MCF 10A (cell line): ENCODE measurements at regions of chr3 and their contacts with region 1.

Region 1: DNA sequence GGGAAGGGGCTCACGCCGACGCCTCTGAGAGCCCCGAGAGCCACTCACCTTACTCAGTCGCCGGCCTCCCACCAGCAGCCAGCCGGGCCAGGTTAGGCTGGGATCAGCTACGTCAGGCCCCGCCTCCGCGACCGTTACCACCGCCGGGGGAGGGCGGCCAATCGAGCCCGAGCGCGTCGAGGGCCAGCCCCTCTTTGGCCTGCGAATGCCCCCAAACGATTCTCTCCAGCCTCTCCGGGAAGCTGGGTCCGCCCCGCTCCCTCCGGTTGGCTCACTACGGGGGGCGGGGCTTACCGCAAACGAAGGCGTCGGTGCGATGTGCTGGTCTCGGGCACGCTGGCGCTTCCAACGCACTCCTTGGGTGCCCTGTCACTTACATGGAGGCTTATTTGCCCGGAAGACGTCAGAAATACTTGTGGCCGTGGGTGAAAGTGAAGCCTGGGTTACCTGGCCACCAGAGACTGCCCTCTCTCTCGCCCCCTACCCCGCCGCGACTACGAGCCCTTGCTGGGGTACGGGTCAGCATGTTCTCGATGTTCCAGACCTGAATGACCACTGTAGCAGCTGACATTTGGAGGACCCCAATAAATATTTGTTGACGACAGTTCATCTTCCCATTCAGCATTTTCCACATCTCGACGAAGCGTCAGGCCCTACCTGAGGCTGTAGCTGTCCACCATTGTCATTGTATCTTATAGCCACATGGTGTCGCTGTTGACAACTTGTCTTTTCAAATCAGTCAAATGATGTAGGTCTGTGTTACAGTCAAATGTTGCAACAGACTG is at the start of gene CEP70:
- DNase-seq: peak; percentile 96
- H3K4me3 Mint-ChIP-seq: peak within 1 kb of the TSS; percentile 81
- H3K27ac Mint-ChIP-seq: peak within 1 kb of the TSS; percentile 69
- H3K4me1 Mint-ChIP-seq: no peaks in the 10 kb centered on the region
- H3K27me3 Mint-ChIP-seq: no peaks in the 10 kb centered on the region
- CTCF ChIP-seq: peak; percentile 81
- total RNA-seq, gene CEP70: 21.3 and 25.9 TPM in 2 replicates

Region 2: DNA sequence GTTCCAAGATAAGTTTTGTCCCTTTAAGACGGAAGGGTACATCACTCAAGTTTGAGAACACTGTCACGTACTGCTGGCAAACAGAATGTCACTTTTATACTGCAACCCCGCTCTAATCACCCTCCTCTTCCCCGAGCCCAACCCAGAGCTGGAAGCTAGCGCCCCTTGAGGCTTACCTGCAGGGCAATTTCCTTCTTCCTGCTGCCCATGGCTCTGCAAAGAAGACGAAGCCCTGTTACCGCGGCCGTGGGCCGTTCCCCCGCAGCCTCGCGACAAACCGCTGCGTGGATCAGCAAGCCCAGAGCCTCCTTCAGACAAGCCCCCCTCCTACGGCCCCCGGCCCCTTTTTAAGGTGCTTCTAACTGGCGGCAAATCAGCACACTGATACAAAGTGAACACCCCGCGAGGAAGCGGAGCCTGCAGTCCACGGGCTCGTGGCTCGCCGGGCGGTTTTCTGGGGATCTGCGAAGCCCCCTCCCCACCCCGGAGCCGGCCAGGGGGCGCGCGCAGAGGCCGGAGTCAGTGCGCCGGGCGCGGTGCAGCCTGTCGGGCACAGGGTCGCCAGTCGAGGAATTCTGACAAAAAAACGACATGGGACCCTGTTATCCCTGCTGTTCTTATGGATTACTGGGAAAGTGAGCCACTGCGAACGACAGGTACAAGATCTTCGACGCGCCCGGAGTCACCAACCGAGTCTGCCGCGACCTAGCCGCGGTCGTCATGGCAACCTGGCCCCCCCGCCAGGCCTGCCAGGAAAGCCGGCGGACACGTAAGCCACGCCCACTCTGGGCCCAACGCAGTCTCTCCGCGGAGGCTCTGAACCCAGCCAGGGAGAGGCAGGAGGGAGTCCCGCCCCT is 265.0 kb before region 1 on chr3 and contains the start of gene NME9:
- CTCF ChIA-PET with region 1: interaction called, 5 read pairs
- POLR2A ChIA-PET with region 1: interaction called, 4 read pairs
- intact Hi-C with region 1: loop called (anchors 5 kb)
- DNase-seq: peak; percentile 76
- H3K4me3 Mint-ChIP-seq: peak within 1 kb of the TSS; percentile 69
- H3K27ac Mint-ChIP-seq: peak within 1 kb of the TSS; percentile 13
- H3K4me1 Mint-ChIP-seq: peaks cover 8% of the 10 kb centered on the region
- H3K27me3 Mint-ChIP-seq: no peaks in the 10 kb centered on the region
- CTCF ChIP-seq: peak; percentile 37
- total RNA-seq, gene NME9: not detected in 2 replicates

Region 3: DNA sequence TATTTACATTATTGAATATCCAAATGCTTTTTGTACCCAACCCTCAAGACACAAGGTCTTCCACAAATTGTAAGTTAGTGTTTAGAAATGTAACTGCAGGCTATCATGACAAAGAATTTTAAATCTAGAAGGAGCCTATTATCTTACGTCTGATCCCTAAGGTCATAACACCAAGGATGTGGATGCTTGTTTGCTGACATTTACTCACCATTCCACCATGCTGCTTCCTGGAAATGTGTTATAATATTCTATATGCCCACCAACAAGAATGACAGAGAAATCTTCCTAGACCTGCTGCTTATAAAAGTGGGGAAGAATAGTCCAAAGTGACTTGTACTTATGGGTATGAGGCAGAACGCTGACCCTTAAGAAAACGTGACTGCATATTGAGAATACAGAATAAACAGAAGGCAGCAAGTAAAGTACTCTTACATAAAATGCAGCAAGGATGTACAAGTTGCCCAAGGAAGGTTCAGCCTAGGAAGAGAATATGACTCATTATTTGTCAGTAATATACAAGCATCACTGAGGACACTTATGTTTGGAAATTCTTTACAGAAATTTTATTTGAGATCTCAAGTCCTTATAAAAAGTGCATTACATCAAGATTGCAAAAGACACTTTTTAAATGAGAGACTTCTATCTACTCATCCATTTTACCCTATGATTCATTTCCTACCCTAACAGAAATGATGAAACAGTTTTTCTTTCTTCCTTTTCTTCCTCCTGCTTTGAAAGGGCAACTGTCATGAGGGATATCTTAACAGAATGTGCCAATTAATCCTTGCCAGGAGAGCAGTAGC is 100.3 kb before region 1 on chr3:
- CTCF ChIA-PET with region 1: interaction called, 4 read pairs
- POLR2A ChIA-PET with region 1: no interaction called
- intact Hi-C with region 1: loop called (anchors 5 kb)
- DNase-seq: peak; percentile 86
- H3K4me3 Mint-ChIP-seq: no peak overlapping the region
- H3K27ac Mint-ChIP-seq: peak overlapping the region; percentile 14
- H3K4me1 Mint-ChIP-seq: peaks cover 16% of the 10 kb centered on the region
- H3K27me3 Mint-ChIP-seq: no peaks in the 10 kb centered on the region
- CTCF ChIP-seq: no peak

Region 4: GRCh38 chr3:138694287-138695007 is 100.1 kb after region 1 on chr3:
- CTCF ChIA-PET with region 1: interaction called, 12 read pairs
- POLR2A ChIA-PET with region 1: interaction called, 3 read pairs
- intact Hi-C with region 1: loop called (anchors 1 kb)
- DNase-seq: peak; percentile 80
- H3K4me3 Mint-ChIP-seq: peak overlapping the region; percentile 2
- H3K27ac Mint-ChIP-seq: peak overlapping the region; percentile 43
- H3K4me1 Mint-ChIP-seq: peaks cover 8% of the 10 kb centered on the region
- H3K27me3 Mint-ChIP-seq: no peaks in the 10 kb centered on the region
- CTCF ChIP-seq: no peak

Region 5: GRCh38 chr3:138909904-138910303 is 315.6 kb after region 1 on chr3:
- CTCF ChIA-PET with region 1: interaction called, 364 read pairs
- POLR2A ChIA-PET with region 1: interaction called, 62 read pairs
- intact Hi-C with region 1: loop called (anchors 1 kb)
- DNase-seq: no peak
- H3K4me3 Mint-ChIP-seq: no peak overlapping the region
- H3K27ac Mint-ChIP-seq: no peak overlapping the region
- H3K4me1 Mint-ChIP-seq: peaks cover 3% of the 10 kb centered on the region
- H3K27me3 Mint-ChIP-seq: no peaks in the 10 kb centered on the region
- CTCF ChIP-seq: no peak